ENCODE measurements at regions of chr1 and their contacts with region 1.

Region 1: GRCh38 chr1:12596007-12596821 is 21.8 kb downstream of the DHRS3 start:
- DNase-seq: peak; percentile 96 to 98
- ATAC-seq: peak; percentile 90
- H3K4me3 ChIP-seq: no peak overlapping the region
- H3K27ac ChIP-seq: peak overlapping the region; percentile 90 to 97
- H3K4me1 ChIP-seq: no peaks in the 10 kb centered on the region
- H3K27me3 ChIP-seq: no peaks in the 10 kb centered on the region

Region 2: DNA sequence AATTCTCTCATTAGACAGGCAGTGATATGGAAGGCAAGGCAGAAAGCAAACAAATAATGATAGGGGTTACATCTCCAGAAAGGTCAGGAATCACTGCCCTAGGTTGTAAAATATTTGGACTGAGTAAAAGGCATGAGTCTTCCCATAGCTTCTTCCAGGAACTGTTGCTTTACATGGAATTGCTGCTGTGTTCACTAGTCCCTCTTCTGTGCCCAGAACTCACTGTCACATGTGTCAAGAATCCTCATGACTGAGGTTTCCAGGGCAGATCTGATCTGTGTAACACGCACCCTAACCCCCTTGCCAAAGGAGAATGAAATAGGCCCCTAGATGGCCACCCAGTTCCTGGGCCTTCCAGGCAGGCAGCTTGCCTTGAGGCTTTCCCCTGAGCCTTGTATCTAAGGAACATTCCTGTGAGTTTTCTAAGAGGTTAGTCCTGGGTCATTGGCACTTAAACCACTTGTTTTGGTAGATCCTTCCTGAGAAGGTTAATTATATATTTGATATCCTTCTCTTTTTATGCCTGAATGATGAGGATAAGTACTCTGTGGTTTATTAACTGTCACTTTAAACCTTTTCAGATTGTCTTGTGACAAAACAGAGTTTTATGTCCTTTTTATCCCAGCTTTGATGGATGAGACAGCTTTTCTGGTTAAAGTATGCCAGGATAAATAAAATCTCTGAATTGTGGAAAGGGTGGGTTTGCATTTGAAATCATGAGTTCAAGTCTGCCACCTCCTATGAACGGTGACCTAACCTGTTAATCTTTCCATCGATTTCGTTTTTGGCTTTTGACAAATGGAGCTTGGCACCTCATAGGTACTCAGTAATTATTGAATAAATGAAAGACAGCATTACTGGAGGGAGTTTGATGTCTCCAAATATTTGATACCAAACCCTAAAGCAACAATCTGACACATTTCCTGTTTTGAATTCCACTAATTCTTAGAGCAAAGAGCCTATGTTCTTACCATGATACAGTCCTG is 141.5 kb before region 1 on chr1:
- intact Hi-C with region 1: loop called in 1 of 2 experiments (anchors 10 kb)
- DNase-seq: peak in 1 of 2 donors; percentile 71
- ATAC-seq: peak; percentile 75
- H3K4me3 ChIP-seq: no peak overlapping the region
- H3K27ac ChIP-seq: peak overlapping the region; percentile 87 to 89
- H3K4me1 ChIP-seq: peaks cover 12 to 25% of the 10 kb centered on the region in 2 donors
- H3K27me3 ChIP-seq: no peaks in the 10 kb centered on the region

Region 3: GRCh38 chr1:12549460-12550349 is 46.5 kb before region 1 on chr1:
- intact Hi-C with region 1: loop called in 1 of 2 experiments (anchors 10 kb)
- DNase-seq: peak; percentile 85 to 90
- ATAC-seq: peak; percentile 55
- H3K4me3 ChIP-seq: no peak overlapping the region
- H3K27ac ChIP-seq: no peak overlapping the region
- H3K4me1 ChIP-seq: peaks cover 0 to 2% of the 10 kb centered on the region in 2 donors
- H3K27me3 ChIP-seq: no peaks in the 10 kb centered on the region

Region 4: GRCh38 chr1:12556368-12556930 is 39.8 kb before region 1 on chr1:
- intact Hi-C with region 1: loop called in 1 of 2 experiments (anchors 5 kb)
- DNase-seq: peak; percentile 71 to 78
- ATAC-seq: peak; percentile 79
- H3K4me3 ChIP-seq: no peak overlapping the region
- H3K27ac ChIP-seq: peak overlapping the region; percentile 36 to 92
- H3K4me1 ChIP-seq: no peaks in the 10 kb centered on the region
- H3K27me3 ChIP-seq: no peaks in the 10 kb centered on the region